GM12878 (cell line): ENCODE measurements at regions of chr2 and their contacts with region 1.

Region 1: GRCh38 chr2:11753886-11754699 is 7.7 kb downstream of the LPIN1 start:
- DNase-seq: peak; percentile 48
- ATAC-seq: peak; percentile 38
- H3K4me3 ChIP-seq: peak overlapping the region; percentile 66
- H3K27ac ChIP-seq: peak overlapping the region; percentile 97
- H3K4me1 ChIP-seq: peaks cover 59% of the 10 kb centered on the region
- H3K27me3 ChIP-seq: no peaks in the 10 kb centered on the region
- CTCF ChIP-seq: no peak
- EP300 ChIP-seq: no peak
- POLR2A ChIP-seq: peak; percentile 60; the same call in 1 of the 2 replicates
- RAD21 ChIP-seq: no peak

Region 2: GRCh38 chr2:11738589-11739436 is 15.3 kb before region 1 on chr2:
- CTCF ChIA-PET with region 1: interaction called, 218 read pairs
- POLR2A ChIA-PET with region 1: interaction called, 84 read pairs
- RAD21 ChIA-PET with region 1: interaction called, 51 read pairs
- SMC1A ChIA-PET with region 1: interaction called, 174 read pairs
- in situ Hi-C with region 1: no loop called
- intact Hi-C with region 1: no loop called
- DNase-seq: no peak
- ATAC-seq: peak; percentile 96
- H3K4me3 ChIP-seq: no peak overlapping the region
- H3K27ac ChIP-seq: no peak overlapping the region
- H3K4me1 ChIP-seq: peaks cover 9% of the 10 kb centered on the region
- H3K27me3 ChIP-seq: peaks cover 0 to 5% of the 10 kb centered on the region in 2 experiments; a peak in 1 of 4 replicates
- CTCF ChIP-seq: peak; percentile 46 to 70 (median 67)
- EP300 ChIP-seq: no peak
- POLR2A ChIP-seq: no peak
- RAD21 ChIP-seq: peak; percentile 77

Region 3: GRCh38 chr2:11743846-11744553 is 10.1 kb before region 1 on chr2:
- CTCF ChIA-PET with region 1: interaction called, 218 read pairs
- POLR2A ChIA-PET with region 1: interaction called, 84 read pairs
- RAD21 ChIA-PET with region 1: interaction called, 51 read pairs
- SMC1A ChIA-PET with region 1: interaction called, 174 read pairs
- in situ Hi-C with region 1: no loop called
- intact Hi-C with region 1: no loop called
- DNase-seq: peak; percentile 82
- ATAC-seq: peak; percentile 73
- H3K4me3 ChIP-seq: peak overlapping the region; percentile 1; the same call in 1 of the 2 replicates
- H3K27ac ChIP-seq: peak overlapping the region; percentile 4; the same call in 1 of the 2 replicates
- H3K4me1 ChIP-seq: peaks cover 39% of the 10 kb centered on the region
- H3K27me3 ChIP-seq: no peaks in the 10 kb centered on the region
- CTCF ChIP-seq: no peak
- EP300 ChIP-seq: no peak; a peak in 2 of 4 replicates
- POLR2A ChIP-seq: peak; percentile 26; the same call in 1 of the 2 replicates
- RAD21 ChIP-seq: no peak

Region 4: GRCh38 chr2:11764359-11764758 is 10.3 kb after region 1 on chr2:
- CTCF ChIA-PET with region 1: interaction called, 18 read pairs
- POLR2A ChIA-PET with region 1: interaction called, 3 read pairs
- RAD21 ChIA-PET with region 1: no interaction called
- SMC1A ChIA-PET with region 1: interaction called, 15 read pairs
- in situ Hi-C with region 1: no loop called
- intact Hi-C with region 1: no loop called
- DNase-seq: no peak
- ATAC-seq: no peak
- H3K4me3 ChIP-seq: no peak overlapping the region
- H3K27ac ChIP-seq: no peak overlapping the region
- H3K4me1 ChIP-seq: no peaks in the 10 kb centered on the region
- H3K27me3 ChIP-seq: no peaks in the 10 kb centered on the region
- CTCF ChIP-seq: no peak
- EP300 ChIP-seq: no peak
- POLR2A ChIP-seq: no peak
- RAD21 ChIP-seq: no peak